HCT116 (cell line): ENCODE measurements at regions of chr1 and their contacts with region 1.

Region 1: GRCh38 chr1:109984456-109985275 is at the start of gene AHCYL1:
- DNase-seq: peak; percentile 94
- ATAC-seq: peak; percentile 97
- H3K4me3 ChIP-seq: peak within 1 kb of the TSS; percentile 78 to 82
- H3K27ac ChIP-seq: peak within 1 kb of the TSS; percentile 66
- H3K4me1 ChIP-seq: peaks cover 6 to 30% of the 10 kb centered on the region in 2 experiments; a peak in 3 of 4 replicates
- H3K27me3 ChIP-seq: no peaks in the 10 kb centered on the region
- CTCF ChIP-seq: peak; percentile 92 to 96 (median 94)
- POLR2A ChIP-seq: peak; percentile 70
- RAD21 ChIP-seq: peak; percentile 99
- total RNA-seq, gene AHCYL1: 92.0 TPM

Region 2: GRCh38 chr1:109643385-109644230 is 341.1 kb before region 1 on chr1:
- CTCF ChIA-PET with region 1: interaction called, 60 read pairs
- POLR2A ChIA-PET with region 1: no interaction called
- RAD21 ChIA-PET with region 1: interaction called, 4 to 6 read pairs
- intact Hi-C with region 1: loop called (anchors 1 kb)
- DNase-seq: peak; percentile 60
- ATAC-seq: peak; percentile 95
- H3K4me3 ChIP-seq: peak overlapping the region; percentile 16 to 19; a peak in 3 of 4 replicates
- H3K27ac ChIP-seq: no peak overlapping the region; the same call in 1 of the 2 replicates
- H3K4me1 ChIP-seq: peaks cover 2 to 17% of the 10 kb centered on the region in 2 experiments
- H3K27me3 ChIP-seq: no peaks in the 10 kb centered on the region
- CTCF ChIP-seq: peak; percentile 87 to 93 (median 89)
- POLR2A ChIP-seq: no peak
- RAD21 ChIP-seq: peak; percentile 83

Region 3: DNA sequence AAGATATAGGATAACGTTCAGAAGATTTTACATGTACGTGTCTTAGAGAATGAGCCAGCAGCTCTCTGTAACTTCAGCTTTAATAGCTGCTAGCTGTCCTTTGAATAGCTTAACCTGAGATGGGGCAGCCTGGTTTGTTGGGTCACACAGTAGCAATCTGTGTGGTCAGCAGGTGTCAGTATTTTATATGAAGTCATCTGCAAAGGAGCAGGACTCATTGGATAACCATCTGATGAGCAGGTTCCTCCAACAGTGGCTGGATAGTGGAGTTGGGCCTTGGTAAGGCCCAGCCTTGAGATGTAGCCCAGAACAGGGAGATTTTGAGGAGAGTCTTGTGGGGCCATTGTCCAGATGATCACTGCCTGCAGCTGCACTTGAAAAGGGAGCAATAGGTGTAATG is 266.2 kb before region 1 on chr1:
- CTCF ChIA-PET with region 1: interaction called, 6 read pairs
- POLR2A ChIA-PET with region 1: no interaction called
- RAD21 ChIA-PET with region 1: no interaction called
- intact Hi-C with region 1: loop called (anchors 5 kb)
- DNase-seq: peak; percentile 44
- ATAC-seq: peak; percentile 95
- H3K4me3 ChIP-seq: no peak overlapping the region
- H3K27ac ChIP-seq: no peak overlapping the region
- H3K4me1 ChIP-seq: peaks cover 0 to 14% of the 10 kb centered on the region in 2 experiments; a peak in 2 of 4 replicates
- H3K27me3 ChIP-seq: no peaks in the 10 kb centered on the region
- CTCF ChIP-seq: peak in 2 of 3 experiments; percentile 15 to 58; a peak in 3 of 6 replicates
- POLR2A ChIP-seq: no peak
- RAD21 ChIP-seq: peak; percentile 74

Region 4: DNA sequence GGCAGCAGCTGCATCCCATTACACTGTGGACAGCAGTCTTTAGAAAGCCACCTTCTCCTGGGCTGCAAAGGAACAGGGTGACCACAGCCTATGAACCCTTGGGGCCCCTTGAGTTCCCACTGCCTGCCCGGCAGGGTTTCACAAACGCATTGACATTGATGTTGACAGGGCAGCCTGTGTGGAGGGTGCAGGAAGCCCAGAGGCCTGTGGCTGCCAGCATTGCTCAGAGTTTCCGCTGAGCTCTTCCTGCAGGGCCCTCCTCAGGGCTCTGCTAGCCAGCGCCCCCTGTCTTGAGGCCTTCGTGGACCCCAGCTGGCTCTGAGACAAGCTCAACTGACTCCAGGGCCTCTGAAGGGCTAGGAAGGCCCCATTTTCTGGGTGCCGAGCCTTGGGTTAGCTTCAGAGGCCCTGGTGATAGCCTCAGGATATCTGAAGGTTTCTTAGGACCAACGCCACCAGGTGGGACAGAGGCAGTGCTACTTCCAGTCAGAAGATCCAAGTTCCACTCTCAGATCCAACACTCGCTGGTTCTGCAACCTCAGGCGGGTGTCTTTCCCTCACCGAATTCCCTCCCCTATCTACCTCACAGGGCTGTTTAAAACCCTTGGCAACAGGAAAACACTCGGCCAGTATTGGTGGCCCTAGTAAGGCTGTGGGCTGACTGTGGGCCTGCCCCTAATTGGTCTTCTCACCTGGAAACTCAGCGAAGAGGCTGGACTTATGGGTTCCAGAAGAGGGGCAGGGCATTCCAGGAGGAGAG is 193.8 kb before region 1 on chr1:
- CTCF ChIA-PET with region 1: interaction called, 396 read pairs
- POLR2A ChIA-PET with region 1: no interaction called
- RAD21 ChIA-PET with region 1: no interaction called
- intact Hi-C with region 1: no loop called
- DNase-seq: peak; percentile 27
- ATAC-seq: peak; percentile 21; the same call in 1 of the 2 replicates
- H3K4me3 ChIP-seq: no peak overlapping the region
- H3K27ac ChIP-seq: no peak overlapping the region; the same call in 1 of the 2 replicates
- H3K4me1 ChIP-seq: peaks cover 36 to 76% of the 10 kb centered on the region in 2 experiments
- H3K27me3 ChIP-seq: no peaks in the 10 kb centered on the region
- CTCF ChIP-seq: peak; percentile 22 to 52 (median 50); a peak in 5 of 6 replicates
- POLR2A ChIP-seq: no peak
- RAD21 ChIP-seq: no peak

Region 5: GRCh38 chr1:109947582-109948286 is 36.9 kb before region 1 on chr1:
- CTCF ChIA-PET with region 1: interaction called, 10 read pairs
- POLR2A ChIA-PET with region 1: no interaction called
- RAD21 ChIA-PET with region 1: no interaction called
- intact Hi-C with region 1: no loop called
- DNase-seq: no peak
- ATAC-seq: no peak
- H3K4me3 ChIP-seq: no peak overlapping the region
- H3K27ac ChIP-seq: no peak overlapping the region
- H3K4me1 ChIP-seq: no peaks in the 10 kb centered on the region
- H3K27me3 ChIP-seq: no peaks in the 10 kb centered on the region
- CTCF ChIP-seq: no peak
- POLR2A ChIP-seq: no peak
- RAD21 ChIP-seq: no peak

Region 6: DNA sequence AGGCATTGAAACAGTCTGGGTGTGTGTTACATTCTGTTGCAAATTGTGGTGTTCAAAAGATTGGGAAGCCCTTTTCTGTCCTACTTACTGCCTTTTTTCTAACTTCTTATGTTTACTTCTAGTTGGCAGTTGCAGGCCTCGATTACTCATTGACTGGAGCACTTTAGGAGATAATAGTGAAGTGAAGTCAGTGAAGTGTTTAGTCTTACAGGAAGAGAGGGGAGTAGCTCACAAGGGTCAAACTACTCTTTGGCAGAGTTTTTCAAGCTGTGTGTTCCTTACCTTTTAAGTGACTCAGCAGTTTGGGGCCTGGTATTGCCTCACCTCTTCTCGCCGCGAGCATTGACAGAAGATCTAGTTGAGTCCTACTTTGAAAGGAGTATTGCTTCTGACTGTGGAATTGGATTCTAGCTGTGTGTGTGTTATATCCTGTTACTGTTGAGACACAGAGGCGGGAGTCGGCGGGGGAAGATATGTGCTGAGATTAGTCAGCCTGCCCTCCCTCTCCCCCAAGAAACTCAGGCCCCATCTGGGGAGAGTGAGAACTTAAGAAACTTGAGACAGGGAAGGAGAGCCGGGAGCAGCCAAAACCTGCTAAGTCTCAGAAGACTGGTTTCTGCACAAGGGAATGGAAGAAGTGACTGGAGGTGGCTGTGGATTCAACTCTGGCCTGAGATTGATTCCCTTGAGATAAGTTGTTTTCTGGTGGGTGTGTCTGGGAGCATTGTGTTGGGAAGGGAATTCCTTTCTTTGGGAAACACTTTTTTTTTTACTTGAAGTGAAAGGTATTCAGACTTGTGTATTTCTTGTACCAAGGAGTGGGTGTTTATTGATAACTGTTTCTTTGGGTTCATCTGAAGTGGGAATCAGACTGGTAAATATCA is 19.3 kb after region 1 on chr1:
- CTCF ChIA-PET with region 1: interaction called, 28 read pairs
- POLR2A ChIA-PET with region 1: interaction called, 10 read pairs
- RAD21 ChIA-PET with region 1: interaction called in 1 of 2 experiments, 3 read pairs
- intact Hi-C with region 1: no loop called
- DNase-seq: peak; percentile 73
- ATAC-seq: peak; percentile 90
- H3K4me3 ChIP-seq: peak overlapping the region; percentile 0 to 39
- H3K27ac ChIP-seq: peak overlapping the region; percentile 85
- H3K4me1 ChIP-seq: peaks cover 28 to 36% of the 10 kb centered on the region in 2 experiments
- H3K27me3 ChIP-seq: no peaks in the 10 kb centered on the region
- CTCF ChIP-seq: no peak
- POLR2A ChIP-seq: no peak
- RAD21 ChIP-seq: 0 out of 2 replicates have a peak, but pooled peaks have one; percentile 8